IMR-90 (cell line): ENCODE measurements at regions of chr20 and their contacts with region 1.

Region 1: GRCh38 chr20:21235484-21236445 is 67.4 kb upstream of the XRN2 start:
- DNase-seq: peak; percentile 66
- ATAC-seq: peak; percentile 93
- H3K4me3 ChIP-seq: no peak overlapping the region
- H3K27ac ChIP-seq: no peak overlapping the region
- H3K4me1 ChIP-seq: no peaks in the 10 kb centered on the region
- H3K27me3 ChIP-seq: no peaks in the 10 kb centered on the region
- CTCF ChIP-seq: peak; percentile 89
- POLR2A ChIP-seq: no peak
- RAD21 ChIP-seq: peak; percentile 84

Region 2: GRCh38 chr20:20837574-20838021 is 398.2 kb before region 1 on chr20:
- CTCF ChIA-PET with region 1: no interaction called
- POLR2A ChIA-PET with region 1: no interaction called
- dilution Hi-C with region 1: no loop called
- in situ Hi-C with region 1: no loop called
- intact Hi-C with region 1: loop called (anchors 1 kb)
- DNase-seq: peak; percentile 35
- ATAC-seq: peak; percentile 87
- H3K4me3 ChIP-seq: no peak overlapping the region
- H3K27ac ChIP-seq: no peak overlapping the region
- H3K4me1 ChIP-seq: no peaks in the 10 kb centered on the region
- H3K27me3 ChIP-seq: 0 out of 2 replicates have a peak, but pooled peaks cover 2% of the 10 kb centered on the region
- CTCF ChIP-seq: peak; percentile 70
- POLR2A ChIP-seq: no peak
- RAD21 ChIP-seq: peak; percentile 65

Region 3: DNA sequence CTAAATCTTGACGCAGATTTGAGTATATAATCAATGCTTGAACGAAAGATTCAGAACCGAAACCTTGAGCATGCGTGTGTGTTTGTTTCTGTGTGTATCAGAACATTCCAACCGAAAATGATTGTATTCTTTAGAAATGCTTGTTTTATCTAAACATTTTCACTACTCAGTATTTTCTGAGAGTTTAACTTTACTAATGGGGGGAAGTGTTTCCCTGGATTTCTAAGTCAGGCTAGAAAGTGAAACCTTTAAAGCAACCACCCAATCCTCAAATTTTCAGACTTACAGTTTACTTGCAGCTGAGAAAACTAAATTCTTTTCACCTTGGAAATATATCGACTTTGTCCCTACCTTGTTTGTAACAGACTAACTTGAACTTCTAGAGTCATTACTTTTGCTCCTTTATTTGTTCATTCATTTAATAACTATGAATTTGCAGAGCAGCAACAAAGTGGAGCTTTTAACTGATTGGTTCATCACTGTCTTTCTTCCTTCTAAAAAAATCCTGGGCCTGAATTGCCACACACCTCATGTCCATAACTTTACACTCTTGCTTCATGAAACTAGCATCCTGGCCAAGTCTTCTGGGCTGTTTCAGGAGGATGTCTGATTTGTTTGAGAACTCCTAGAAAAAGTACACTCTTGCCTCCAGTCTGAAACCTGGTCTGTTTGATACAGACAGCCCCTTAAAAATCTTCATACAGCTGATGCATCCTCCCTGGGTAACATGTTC is 10.4 kb before region 1 on chr20:
- CTCF ChIA-PET with region 1: interaction called, 16 read pairs
- POLR2A ChIA-PET with region 1: no interaction called
- dilution Hi-C with region 1: no loop called
- in situ Hi-C with region 1: no loop called
- intact Hi-C with region 1: no loop called
- DNase-seq: peak; percentile 44
- ATAC-seq: peak; percentile 86
- H3K4me3 ChIP-seq: peak overlapping the region; percentile 34; the same call in 1 of the 2 replicates
- H3K27ac ChIP-seq: peak overlapping the region; percentile 20; the same call in 1 of the 2 replicates
- H3K4me1 ChIP-seq: peaks cover 7% of the 10 kb centered on the region
- H3K27me3 ChIP-seq: no peaks in the 10 kb centered on the region
- CTCF ChIP-seq: no peak
- POLR2A ChIP-seq: no peak
- RAD21 ChIP-seq: no peak

Region 4: DNA sequence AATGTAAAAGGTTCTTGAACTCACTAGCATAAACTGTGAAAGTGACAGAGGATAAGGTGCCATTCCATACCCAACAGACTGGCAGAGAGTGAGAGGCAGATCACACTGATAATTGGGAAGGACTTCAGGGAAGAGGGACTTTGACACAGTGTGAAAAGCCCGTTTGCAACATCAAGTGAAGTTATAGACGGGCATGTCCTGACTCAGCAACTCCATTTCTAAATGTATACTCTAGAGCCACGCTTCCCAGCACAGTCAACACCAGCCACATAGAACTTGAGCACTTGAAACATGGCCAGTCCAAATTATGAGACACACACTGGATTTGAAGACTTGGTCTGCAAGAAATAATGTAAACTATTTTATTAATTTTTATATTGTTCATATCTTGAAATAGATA is 21.4 kb after region 1 on chr20:
- CTCF ChIA-PET with region 1: no interaction called
- POLR2A ChIA-PET with region 1: no interaction called
- dilution Hi-C with region 1: no loop called
- in situ Hi-C with region 1: no loop called
- intact Hi-C with region 1: no loop called
- DNase-seq: no peak
- ATAC-seq: no peak
- H3K4me3 ChIP-seq: no peak overlapping the region
- H3K27ac ChIP-seq: no peak overlapping the region
- H3K4me1 ChIP-seq: no peaks in the 10 kb centered on the region
- H3K27me3 ChIP-seq: peaks cover 2% of the 10 kb centered on the region; the same call in 1 of the 2 replicates
- CTCF ChIP-seq: no peak
- POLR2A ChIP-seq: no peak
- RAD21 ChIP-seq: no peak

Region 5: GRCh38 chr20:21352703-21353102 is 116.9 kb after region 1 on chr20:
- CTCF ChIA-PET with region 1: no interaction called
- POLR2A ChIA-PET with region 1: no interaction called
- dilution Hi-C with region 1: no loop called
- in situ Hi-C with region 1: no loop called
- intact Hi-C with region 1: loop called (anchors 1 kb)
- DNase-seq: peak; percentile 78
- ATAC-seq: peak; percentile 88
- H3K4me3 ChIP-seq: no peak overlapping the region
- H3K27ac ChIP-seq: no peak overlapping the region
- H3K4me1 ChIP-seq: peaks cover 4% of the 10 kb centered on the region; the same call in 1 of the 2 replicates
- H3K27me3 ChIP-seq: no peaks in the 10 kb centered on the region
- CTCF ChIP-seq: peak; percentile 21; the same call in 1 of the 2 replicates
- POLR2A ChIP-seq: no peak
- RAD21 ChIP-seq: peak; percentile 27; the same call in 1 of the 2 replicates

Region 6: DNA sequence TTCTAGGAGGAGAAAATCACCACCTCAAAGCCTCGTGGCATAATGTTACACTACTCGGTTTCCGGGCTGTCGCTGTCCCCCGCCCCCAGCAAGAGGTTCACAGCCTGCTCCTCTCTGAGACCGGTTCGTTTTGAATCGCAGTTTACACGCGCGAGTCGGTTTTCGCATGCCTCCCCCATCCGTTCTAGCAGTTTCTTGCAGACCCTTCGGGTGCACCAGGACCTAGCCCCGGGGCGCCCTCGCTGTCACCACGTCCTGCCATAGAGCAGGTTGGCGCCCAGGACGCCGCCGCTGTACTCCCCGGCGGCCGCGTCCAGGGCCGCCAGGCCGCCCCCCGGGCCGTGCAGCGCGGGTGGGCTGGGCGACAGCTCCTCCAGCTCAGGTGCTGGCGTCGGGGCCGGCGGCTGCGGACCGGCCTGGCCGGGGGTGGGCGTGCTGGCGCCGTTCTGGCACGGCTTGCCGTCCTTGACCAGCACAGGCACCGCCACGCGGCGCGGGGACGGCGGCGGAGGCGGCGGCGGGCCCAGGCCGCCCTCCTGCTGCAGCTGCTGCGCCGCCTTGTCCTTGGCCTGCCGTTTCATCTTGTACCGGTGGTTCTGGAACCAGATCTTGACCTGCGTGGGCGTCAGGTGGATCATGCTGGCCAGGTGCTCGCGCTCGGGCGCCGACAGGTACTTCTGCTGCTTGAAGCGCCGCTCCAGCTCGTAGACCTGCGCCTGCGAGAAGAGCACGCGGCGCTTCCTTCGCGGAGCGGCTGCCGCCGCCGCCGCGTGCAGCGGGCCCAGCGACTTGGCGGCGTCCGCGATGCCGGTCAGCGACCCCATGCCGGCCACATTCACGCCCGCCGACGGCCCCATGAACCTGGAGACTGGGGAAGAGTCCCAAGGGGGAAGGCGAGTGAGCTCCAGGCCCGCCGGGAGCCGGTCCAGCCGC is 160.2 kb after region 1 on chr20:
- CTCF ChIA-PET with region 1: no interaction called
- POLR2A ChIA-PET with region 1: no interaction called
- dilution Hi-C with region 1: no loop called
- in situ Hi-C with region 1: no loop called
- intact Hi-C with region 1: loop called (anchors 10 kb)
- DNase-seq: no peak
- ATAC-seq: no peak; the same call in 1 of the 2 replicates
- H3K4me3 ChIP-seq: peak overlapping the region; percentile 19; the same call in 1 of the 2 replicates
- H3K27ac ChIP-seq: no peak overlapping the region
- H3K4me1 ChIP-seq: peaks cover 2% of the 10 kb centered on the region; the same call in 1 of the 2 replicates
- H3K27me3 ChIP-seq: peaks cover 81% of the 10 kb centered on the region
- CTCF ChIP-seq: no peak
- POLR2A ChIP-seq: no peak
- RAD21 ChIP-seq: no peak

Region 7: DNA sequence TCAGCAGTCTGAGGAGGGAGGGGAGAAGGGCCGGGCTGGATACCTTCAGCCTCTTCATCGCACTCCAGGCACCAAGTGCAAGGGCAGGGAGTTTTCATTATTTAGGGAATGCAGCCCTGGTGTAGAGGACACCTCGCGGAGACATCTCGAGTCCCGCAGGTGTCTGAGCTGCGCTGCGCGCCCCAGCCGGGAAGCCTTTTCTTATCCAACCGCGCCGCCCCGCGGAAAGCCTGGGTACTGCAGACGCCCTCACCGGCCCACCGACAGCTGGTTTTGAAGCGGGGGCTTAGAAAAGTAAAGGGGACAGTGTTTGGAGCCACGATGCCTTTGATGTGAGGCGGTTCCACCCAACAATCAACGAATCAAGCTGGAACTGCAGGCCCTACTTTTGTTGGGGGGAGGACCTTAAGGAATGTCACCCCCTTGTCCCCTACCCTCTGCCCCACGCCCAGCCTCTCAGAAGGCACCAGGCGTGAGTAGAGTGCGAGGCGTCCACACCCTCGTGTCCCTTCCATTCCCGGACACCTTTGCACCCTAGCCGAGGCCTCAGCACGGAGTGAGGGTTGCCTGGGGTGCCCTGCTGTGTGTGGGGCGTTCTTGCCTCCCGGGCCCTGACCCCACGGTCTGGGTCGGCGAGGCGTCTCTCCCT is 269.5 kb after region 1 on chr20:
- CTCF ChIA-PET with region 1: interaction called, 40 read pairs
- POLR2A ChIA-PET with region 1: no interaction called
- dilution Hi-C with region 1: no loop called
- in situ Hi-C with region 1: loop called (anchors 5 kb)
- intact Hi-C with region 1: loop called (anchors 1 kb)
- DNase-seq: peak; percentile 22
- ATAC-seq: peak; percentile 84
- H3K4me3 ChIP-seq: no peak overlapping the region
- H3K27ac ChIP-seq: no peak overlapping the region
- H3K4me1 ChIP-seq: no peaks in the 10 kb centered on the region; the same call in 1 of the 2 replicates
- H3K27me3 ChIP-seq: peaks cover 61% of the 10 kb centered on the region
- CTCF ChIP-seq: peak; percentile 96
- POLR2A ChIP-seq: peak; percentile 39; the same call in 1 of the 2 replicates
- RAD21 ChIP-seq: peak; percentile 96

Region 8: GRCh38 chr20:21862259-21862946 is 626.6 kb after region 1 on chr20:
- CTCF ChIA-PET with region 1: no interaction called
- POLR2A ChIA-PET with region 1: no interaction called
- dilution Hi-C with region 1: no loop called
- in situ Hi-C with region 1: no loop called
- intact Hi-C with region 1: no loop called
- DNase-seq: no peak
- ATAC-seq: no peak
- H3K4me3 ChIP-seq: no peak overlapping the region
- H3K27ac ChIP-seq: no peak overlapping the region
- H3K4me1 ChIP-seq: no peaks in the 10 kb centered on the region
- H3K27me3 ChIP-seq: no peaks in the 10 kb centered on the region
- CTCF ChIP-seq: no peak
- POLR2A ChIP-seq: no peak
- RAD21 ChIP-seq: no peak

Region 9: DNA sequence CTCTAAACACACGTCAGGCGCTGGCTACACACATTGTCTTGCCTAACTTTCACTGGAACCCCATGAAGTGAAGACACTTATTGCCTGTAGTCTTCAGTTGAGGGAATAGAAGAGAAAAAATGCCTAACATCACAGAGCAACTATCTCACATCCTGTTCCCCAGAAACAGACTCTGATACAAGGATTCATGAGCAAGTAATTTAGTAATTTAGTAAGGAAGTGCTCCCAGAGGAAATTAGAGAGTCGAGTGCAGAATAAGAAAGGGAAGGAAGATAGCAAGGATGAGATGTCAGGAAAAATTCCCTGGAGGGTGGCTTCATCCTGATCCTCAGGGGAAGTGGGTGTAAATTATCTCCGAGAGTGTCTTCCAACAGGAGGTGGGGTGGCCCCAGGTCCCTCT is 1244.6 kb after region 1 on chr20:
- CTCF ChIA-PET with region 1: no interaction called
- POLR2A ChIA-PET with region 1: no interaction called
- dilution Hi-C with region 1: no loop called
- in situ Hi-C with region 1: no loop called
- intact Hi-C with region 1: no loop called
- DNase-seq: no peak
- ATAC-seq: no peak
- H3K4me3 ChIP-seq: no peak overlapping the region
- H3K27ac ChIP-seq: no peak overlapping the region
- H3K4me1 ChIP-seq: no peaks in the 10 kb centered on the region
- H3K27me3 ChIP-seq: no peaks in the 10 kb centered on the region
- CTCF ChIP-seq: no peak
- POLR2A ChIP-seq: no peak
- RAD21 ChIP-seq: no peak